Breast epithelium (tissue), 4 donors: ENCODE measurements at regions of chr2 and their contacts with region 1.

Region 1: GRCh38 chr2:179422037-179422643 is 157.5 kb upstream of the SESTD1 start:
- DNase-seq: peak; percentile 44 to 68
- H3K4me3 ChIP-seq: no peak overlapping the region
- H3K27ac ChIP-seq: no peak overlapping the region
- H3K4me1 ChIP-seq: no peaks in the 10 kb centered on the region
- H3K27me3 ChIP-seq: no peaks in the 10 kb centered on the region
- CTCF ChIP-seq: peak; percentile 24 to 67 (median 55)
- POLR2A ChIP-seq: no peak

Region 2: DNA sequence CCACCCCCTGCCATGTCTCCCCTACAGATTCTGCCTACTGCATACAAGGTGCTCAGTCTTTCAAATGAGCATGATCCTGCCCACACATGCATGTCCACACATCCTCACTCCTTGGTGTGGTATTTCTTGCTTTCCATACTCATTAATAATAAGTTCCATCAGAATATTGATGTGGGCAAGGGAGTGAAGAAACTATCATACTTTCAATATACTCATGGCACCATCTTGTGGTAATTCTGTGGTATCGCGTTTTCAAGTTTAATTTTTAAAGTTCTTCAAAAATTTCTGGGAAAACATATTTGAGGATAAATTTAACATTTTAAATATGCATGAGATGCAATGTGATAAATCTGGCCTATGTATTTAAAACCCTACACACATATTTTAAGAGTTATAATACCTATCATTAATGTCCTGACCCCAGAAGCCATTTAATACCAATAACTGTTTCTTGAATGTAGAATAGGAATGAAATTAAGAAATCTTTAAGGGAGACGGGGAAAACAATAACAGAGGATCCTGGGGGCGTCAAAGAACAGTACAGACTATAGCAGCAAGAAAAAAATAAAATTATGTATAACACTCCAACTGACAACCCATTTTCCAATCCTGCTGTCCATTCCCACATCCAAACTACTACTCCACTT is 329.1 kb after region 1 on chr2:
- intact Hi-C with region 1: loop called (anchors 10 kb)
- DNase-seq: no peak
- H3K4me3 ChIP-seq: no peak overlapping the region
- H3K27ac ChIP-seq: no peak overlapping the region
- H3K4me1 ChIP-seq: no peaks in the 10 kb centered on the region
- H3K27me3 ChIP-seq: no peaks in the 10 kb centered on the region
- CTCF ChIP-seq: peak; percentile 49 to 79 (median 65)
- POLR2A ChIP-seq: no peak